ENCODE measurements at regions of chr10 and their contacts with region 1.

Region 1: GRCh38 chr10:24383681-24384106 is 174.8 kb downstream of the KIAA1217 start:
- DNase-seq: peak; percentile 91
- H3K4me3 ChIP-seq: no peak overlapping the region
- H3K27ac ChIP-seq: peak overlapping the region; percentile 73 to 80 (median 74)
- H3K4me1 ChIP-seq: peaks cover 0 to 19% (median 11%) of the 10 kb centered on the region in 4 donors
- H3K27me3 ChIP-seq: no peaks in the 10 kb centered on the region
- CTCF ChIP-seq: peak; percentile 39 to 70 (median 51)
- EP300 ChIP-seq: no peak
- POLR2A ChIP-seq: no peak

Region 2: GRCh38 chr10:25713894-25714240 is 1330.2 kb after region 1 on chr10:
- in situ Hi-C with region 1: no loop called
- intact Hi-C with region 1: loop called (anchors 5 kb)
- DNase-seq: no peak
- H3K4me3 ChIP-seq: no peak overlapping the region
- H3K27ac ChIP-seq: no peak overlapping the region
- H3K4me1 ChIP-seq: no peaks in the 10 kb centered on the region
- H3K27me3 ChIP-seq: no peaks in the 10 kb centered on the region
- CTCF ChIP-seq: no peak
- EP300 ChIP-seq: no peak
- POLR2A ChIP-seq: no peak